ENCODE measurements at regions of chr20 and their contacts with region 1.

Region 1: GRCh38 chr20:62318400-62319345 is 15.9 kb downstream of the ADRM1 start:
- DNase-seq: no peak
- H3K4me3 ChIP-seq: no peak overlapping the region
- H3K27ac ChIP-seq: no peak overlapping the region
- H3K4me1 ChIP-seq: no peaks in the 10 kb centered on the region
- H3K27me3 ChIP-seq: no peaks in the 10 kb centered on the region
- CTCF ChIP-seq: no peak

Region 2: GRCh38 chr20:62352402-62353288 is 34.0 kb after region 1 on chr20:
- intact Hi-C with region 1: loop called (anchors 5 kb)
- DNase-seq: peak; percentile 68 to 97
- H3K4me3 ChIP-seq: peak overlapping the region in 1 of 2 donors; percentile 14
- H3K27ac ChIP-seq: peak overlapping the region; percentile 96 to 97
- H3K4me1 ChIP-seq: peaks cover 12 to 61% (median 56%) of the 10 kb centered on the region in 4 donors
- H3K27me3 ChIP-seq: no peaks in the 10 kb centered on the region
- CTCF ChIP-seq: peak; percentile 54 to 60